ENCODE measurements at regions of chr4 and their contacts with region 1.

Region 1: GRCh38 chr4:9947168-9948062 is 73.9 kb downstream of the SLC2A9 start:
- DNase-seq: no peak

Region 2: GRCh38 chr4:9894644-9895332 is 52.6 kb before region 1 on chr4:
- intact Hi-C with region 1: loop called in 1 of 2 experiments (anchors 1 kb)
- DNase-seq: no peak

Region 3: DNA sequence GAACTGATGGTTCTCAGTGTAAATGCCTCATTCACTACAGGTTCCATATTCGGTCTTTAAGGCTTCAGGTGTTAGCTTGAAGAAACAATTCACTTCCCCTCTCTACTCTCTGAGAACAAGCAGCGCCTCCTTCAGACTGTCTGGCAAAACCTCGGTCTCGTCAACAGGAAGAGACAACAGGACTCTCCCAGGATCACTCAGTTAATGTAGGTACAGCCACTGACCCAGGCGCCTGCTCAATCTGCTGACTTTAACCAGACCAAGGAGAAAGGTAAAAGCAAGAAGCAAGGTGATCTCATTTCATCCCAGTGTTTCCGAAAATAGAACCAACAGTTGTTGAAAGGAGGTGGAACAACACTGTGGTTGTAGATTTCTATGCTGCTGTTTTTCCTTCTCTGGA is 28.4 kb before region 1 on chr4:
- intact Hi-C with region 1: no loop called
- DNase-seq: no peak

Region 4: DNA sequence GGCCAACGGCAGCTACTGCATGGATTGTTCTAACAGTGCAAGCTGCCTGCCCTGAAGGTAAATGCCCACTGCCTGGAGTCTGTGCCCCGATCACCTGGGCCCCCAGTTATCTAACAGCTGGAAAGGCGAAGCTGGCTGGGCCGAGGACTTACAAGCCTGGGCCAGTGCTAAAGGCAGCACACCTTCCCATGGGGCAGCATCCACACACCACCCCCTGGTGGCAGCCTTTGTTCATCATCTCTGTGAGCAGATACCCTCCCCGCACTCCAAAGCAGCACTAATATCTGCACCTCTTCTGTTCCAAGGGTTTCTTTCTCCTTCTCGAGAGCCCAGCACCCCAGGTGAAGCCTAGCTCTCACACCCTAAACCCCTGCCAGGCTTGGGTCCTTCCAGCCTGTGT is 66.3 kb after region 1 on chr4:
- intact Hi-C with region 1: loop called in 1 of 2 experiments (anchors 2 kb)
- DNase-seq: no peak

Region 5: DNA sequence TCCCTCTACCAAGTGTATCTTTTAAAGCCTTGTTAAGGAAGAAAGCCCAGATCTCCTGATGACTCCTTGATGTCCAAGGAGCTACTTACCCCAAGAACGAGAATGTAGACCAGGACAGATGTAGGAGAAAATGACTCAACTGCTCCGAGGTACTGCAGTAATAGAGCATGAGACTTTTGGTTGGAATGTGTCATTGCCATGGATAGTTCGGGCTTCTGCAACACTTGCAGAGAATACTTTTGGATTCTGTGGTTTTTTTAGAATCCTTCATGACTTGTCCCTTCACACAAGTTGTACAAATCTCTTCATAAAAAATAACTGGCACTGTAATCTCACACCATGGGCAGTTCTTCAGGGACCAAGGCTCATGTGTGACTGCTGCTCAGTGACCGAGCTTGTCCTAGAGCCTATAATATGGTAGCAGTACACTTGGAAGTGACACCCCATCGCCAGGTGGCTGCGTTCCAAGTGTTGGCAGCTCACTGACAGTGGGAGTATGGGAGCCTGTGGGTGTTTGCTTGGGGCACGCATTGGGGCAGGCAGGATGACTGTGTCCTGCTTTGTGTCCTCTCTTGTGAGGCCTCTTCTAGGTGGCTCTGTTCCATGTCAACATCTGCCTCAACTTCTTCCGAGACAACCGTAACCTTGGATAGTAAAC is 257.1 kb after region 1 on chr4:
- intact Hi-C with region 1: no loop called
- DNase-seq: no peak